ENCODE measurements at regions of chr12 and their contacts with region 1.

Region 1: GRCh38 chr12:92244036-92244435 is 98.4 kb upstream of the BTG1 start:
- DNase-seq: peak; percentile 28 to 55
- ATAC-seq: peak; percentile 94 to 95
- H3K4me3 ChIP-seq: peak overlapping the region in 2 of 4 donors; percentile 10 to 16
- H3K27ac ChIP-seq: peak overlapping the region; percentile 64 to 82 (median 72)
- H3K4me1 ChIP-seq: peaks cover 11 to 21% of the 10 kb centered on the region in 2 donors
- H3K27me3 ChIP-seq: no peaks in the 10 kb centered on the region
- CTCF ChIP-seq: peak in 1 of 5 experiments; percentile 23
- POLR2A ChIP-seq: no peak

Region 2: GRCh38 chr12:91811481-91812287 is 432.4 kb before region 1 on chr12:
- in situ Hi-C with region 1: loop called in 3 of 4 experiments (anchors 10 to 25 kb)
- intact Hi-C with region 1: loop called (anchors 5 kb)
- DNase-seq: peak; percentile 19 to 27
- ATAC-seq: peak; percentile 50 to 60
- H3K4me3 ChIP-seq: no peak overlapping the region
- H3K27ac ChIP-seq: no peak overlapping the region
- H3K4me1 ChIP-seq: no peaks in the 10 kb centered on the region
- H3K27me3 ChIP-seq: no peaks in the 10 kb centered on the region
- CTCF ChIP-seq: peak; percentile 61 to 75 (median 68)
- POLR2A ChIP-seq: no peak

Region 3: DNA sequence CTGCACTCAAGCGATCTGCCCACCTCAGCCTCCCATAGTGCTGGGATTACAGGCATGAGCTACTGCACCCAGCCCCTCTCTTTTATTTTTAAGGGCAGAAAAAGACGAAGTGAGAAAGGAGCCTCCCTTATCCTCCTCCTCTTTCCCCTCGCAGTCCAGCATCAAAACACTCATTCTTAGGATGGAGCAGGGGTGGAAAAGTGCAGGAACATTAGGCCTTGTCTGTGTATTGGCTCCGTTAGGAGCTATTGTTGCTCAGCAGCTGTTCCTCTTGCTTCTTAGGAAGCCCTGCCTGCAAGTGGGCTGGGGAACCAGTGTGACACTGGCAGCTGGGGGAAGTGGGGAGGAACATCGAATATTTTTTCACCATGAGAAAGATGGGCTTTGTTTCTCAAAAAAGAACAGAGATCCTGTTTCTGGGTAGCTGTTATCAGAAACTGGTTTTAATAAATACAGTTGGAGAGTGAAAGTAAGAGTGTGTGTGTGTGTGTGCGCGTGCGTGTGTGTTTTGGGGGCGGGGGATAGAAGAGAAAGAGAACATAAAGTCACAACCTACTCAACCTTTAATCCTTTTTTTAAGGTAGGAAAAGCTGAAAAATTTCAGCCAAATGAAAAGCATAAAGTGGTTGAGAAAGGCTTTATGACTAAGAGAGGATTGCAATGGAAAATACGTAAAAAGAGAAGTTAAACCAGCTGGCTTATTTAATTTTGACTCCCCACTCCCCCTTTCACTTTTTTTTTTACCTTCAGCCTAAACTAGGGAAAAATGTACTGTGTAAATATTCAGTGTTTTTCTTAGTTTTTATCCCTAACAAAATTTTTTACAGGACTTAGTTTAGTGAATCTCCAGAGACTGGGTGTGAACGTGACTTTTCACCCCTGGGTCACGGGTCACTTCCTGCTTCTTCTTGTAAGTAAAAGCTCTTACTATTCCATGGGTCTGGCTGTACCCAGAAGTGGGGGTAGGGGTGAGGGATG is 261.5 kb after region 1 on chr12:
- in situ Hi-C with region 1: no loop called
- intact Hi-C with region 1: loop called (anchors 10 kb)
- DNase-seq: peak in 1 of 2 donors; percentile 39
- ATAC-seq: peak; percentile 27 to 48
- H3K4me3 ChIP-seq: peak overlapping the region; percentile 0 to 18 (median 8)
- H3K27ac ChIP-seq: peak overlapping the region; percentile 51 to 74 (median 70)
- H3K4me1 ChIP-seq: peaks cover 46 to 48% of the 10 kb centered on the region in 2 donors
- H3K27me3 ChIP-seq: no peaks in the 10 kb centered on the region
- CTCF ChIP-seq: no peak
- POLR2A ChIP-seq: no peak

Measured in gastrocnemius medialis (tissue), 4 donors.